Heart right ventricle (tissue), 16 donors: ENCODE measurements at regions of chr11 and their contacts with region 1.

Region 1: GRCh38 chr11:107858217-107859070 is at the start of gene SLC35F2:
- DNase-seq: peak; percentile 29 to 60
- ATAC-seq: peak; percentile 81 to 93 (median 87)
- H3K4me3 ChIP-seq: peak within 1 kb of the TSS; percentile 34 to 73 (median 66)
- H3K27ac ChIP-seq: peak within 1 kb of the TSS in 5 of 10 donors; percentile 51 to 62 (median 53)
- H3K4me1 ChIP-seq: peaks cover 0 to 29% (median 16%) of the 10 kb centered on the region in 9 donors
- H3K27me3 ChIP-seq: peaks cover 0 to 19% (median 0%) of the 10 kb centered on the region in 7 donors
- CTCF ChIP-seq: no peak
- total RNA-seq, gene SLC35F2: 0.40 to 2.0 (median 0.86) TPM

Region 2: DNA sequence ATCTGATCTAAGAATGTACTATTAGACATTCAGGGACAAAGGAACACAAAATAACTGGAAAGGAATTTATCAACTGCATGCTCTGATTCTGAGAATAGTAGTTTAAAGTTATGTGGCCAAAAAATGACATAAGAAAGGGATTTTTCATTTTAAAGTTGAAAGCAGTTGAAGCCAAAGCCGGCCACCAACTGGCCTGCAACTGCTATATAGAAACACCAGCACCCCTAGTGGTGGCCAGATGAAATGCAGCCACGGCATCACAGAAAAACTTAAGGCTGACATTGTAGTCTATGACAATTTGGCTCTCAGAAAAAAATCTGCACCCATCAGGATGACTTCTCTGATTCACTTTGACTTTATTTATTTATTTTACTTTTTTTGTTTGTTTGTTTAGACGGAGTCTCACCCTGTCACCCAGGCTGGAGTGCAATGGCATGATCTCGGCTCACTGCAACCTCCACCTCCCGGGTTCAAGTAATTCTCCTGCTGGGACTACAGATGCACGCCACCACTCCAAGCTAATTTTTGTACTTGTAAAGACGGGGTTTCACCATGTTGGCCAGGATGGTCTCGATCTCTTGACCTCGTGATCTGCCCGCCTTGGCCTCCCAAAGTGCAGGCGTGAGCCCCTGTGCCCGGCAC is 59.1 kb before region 1 on chr11:
- intact Hi-C with region 1: loop called in 1 of 10 experiments (anchors 10 kb)
- DNase-seq: peak; percentile 41 to 67
- ATAC-seq: peak in 5 of 8 donors; percentile 35 to 81 (median 63)
- H3K4me3 ChIP-seq: no peak overlapping the region
- H3K27ac ChIP-seq: no peak overlapping the region
- H3K4me1 ChIP-seq: peaks cover 0 to 4% (median 0%) of the 10 kb centered on the region in 9 donors
- H3K27me3 ChIP-seq: no peaks in the 10 kb centered on the region
- CTCF ChIP-seq: peak; percentile 83 to 97 (median 92)